ENCODE measurements at regions of chr3 and their contacts with region 1.

Region 1: DNA sequence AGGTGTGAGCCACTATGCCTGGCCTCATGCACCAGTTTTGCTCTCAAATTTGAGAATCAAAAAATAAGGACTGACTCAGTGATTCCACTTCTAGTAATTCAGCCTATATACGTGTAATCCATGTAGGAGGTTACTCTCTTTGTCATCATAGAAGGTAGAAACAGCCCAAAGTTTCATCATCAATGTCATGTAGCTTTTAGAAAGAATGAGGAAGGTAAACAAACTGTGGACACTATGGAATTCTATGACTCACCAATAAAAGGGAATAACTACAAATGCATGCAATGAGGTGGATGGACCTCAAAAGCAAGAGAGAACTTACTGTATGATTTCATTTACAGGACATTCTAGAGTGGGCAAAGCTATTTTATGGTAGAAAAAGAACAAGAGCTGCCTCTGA is 93.1 kb upstream of the LRIG1 start:
- DNase-seq: peak; percentile 85
- H3K4me3 ChIP-seq: no peak overlapping the region
- CTCF ChIP-seq: no peak

Region 2: DNA sequence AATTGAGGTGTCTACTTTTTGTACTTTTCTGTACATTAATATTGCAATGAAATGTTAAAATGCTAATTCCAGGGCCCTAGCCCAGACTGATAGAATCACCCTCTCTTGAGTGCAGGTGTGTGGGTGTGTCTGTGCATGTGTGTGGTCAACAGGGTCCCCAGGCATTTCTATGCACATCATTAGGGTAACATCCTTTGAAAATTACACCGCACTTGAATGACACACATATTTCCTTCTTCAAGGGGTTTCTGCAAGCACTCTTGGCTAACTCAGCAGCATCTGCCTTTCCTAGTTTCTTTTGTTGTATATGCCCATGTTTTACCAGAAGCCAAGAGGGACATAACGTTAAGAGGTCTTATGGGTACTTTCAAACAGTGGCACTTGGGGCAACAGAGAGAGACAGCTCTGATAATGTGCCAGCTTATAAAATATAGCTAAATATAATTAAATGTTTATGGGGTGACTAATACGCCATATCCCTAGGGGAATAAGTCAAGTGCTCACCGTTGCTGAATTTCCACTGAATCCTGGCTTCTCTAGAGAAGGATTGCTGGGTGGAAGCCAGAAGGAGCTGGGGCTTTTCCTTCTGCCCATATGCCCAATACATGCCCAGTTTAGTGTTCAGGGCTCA is 38.6 kb before region 1 on chr3:
- in situ Hi-C with region 1: no loop called
- DNase-seq: no peak
- H3K4me3 ChIP-seq: no peak overlapping the region
- CTCF ChIP-seq: no peak

Region 3: DNA sequence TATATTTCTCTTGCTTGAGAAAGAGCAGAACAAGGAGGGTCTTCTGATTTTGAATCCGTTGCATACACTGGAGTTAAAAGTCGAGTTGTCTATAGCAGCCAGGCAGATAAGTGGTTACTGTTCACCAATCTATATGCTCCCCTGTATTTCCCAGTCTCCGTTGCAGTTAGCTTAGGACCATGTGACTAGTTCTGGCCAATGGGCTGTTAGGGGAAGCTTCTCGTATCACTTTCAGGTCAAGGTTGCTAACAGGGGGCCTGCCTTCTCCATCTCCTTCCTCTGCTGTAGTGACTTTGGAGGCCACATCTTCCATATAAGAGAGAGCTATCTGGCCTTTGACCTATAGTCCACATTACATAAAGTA is 215.6 kb after region 1 on chr3:
- in situ Hi-C with region 1: loop called (anchors 5 kb)
- DNase-seq: no peak
- H3K4me3 ChIP-seq: no peak overlapping the region
- CTCF ChIP-seq: no peak

Measured in astrocyte of the cerebellum (primary cell).